ENCODE measurements at regions of chr7 and their contacts with region 1.

Region 1: GRCh38 chr7:151226875-151227782 is at the start of gene ABCF2:
- DNase-seq: peak; percentile 93 to 99 (median 97)
- ATAC-seq: peak; percentile 99
- H3K4me3 ChIP-seq: peak within 1 kb of the TSS; percentile 90
- H3K4me3 Mint-ChIP-seq: peak within 1 kb of the TSS; percentile 99
- H3K27ac ChIP-seq: peak within 1 kb of the TSS; percentile 63 to 71
- H3K27ac Mint-ChIP-seq: peak within 1 kb of the TSS; percentile 90
- H3K4me1 ChIP-seq: peaks cover 38% of the 10 kb centered on the region
- H3K4me1 Mint-ChIP-seq: peaks cover 41% of the 10 kb centered on the region
- H3K27me3 ChIP-seq: no peaks in the 10 kb centered on the region
- H3K27me3 Mint-ChIP-seq: no peaks in the 10 kb centered on the region
- CTCF ChIP-seq: no peak
- total RNA-seq, gene ABCF2: 12.3 to 13.2 TPM

Region 2: GRCh38 chr7:149771721-149772240 is 1455.3 kb before region 1 on chr7:
- CTCF ChIA-PET with region 1: no interaction called
- POLR2A ChIA-PET with region 1: no interaction called
- intact Hi-C with region 1: loop called in 1 of 2 experiments (anchors 2 kb)
- DNase-seq: peak; percentile 73 to 93 (median 86)
- ATAC-seq: peak; percentile 87
- H3K4me3 ChIP-seq: peak overlapping the region; percentile 67
- H3K4me3 Mint-ChIP-seq: peak overlapping the region; percentile 84
- H3K27ac ChIP-seq: no peak overlapping the region
- H3K27ac Mint-ChIP-seq: no peak overlapping the region
- H3K4me1 ChIP-seq: peaks cover 31% of the 10 kb centered on the region
- H3K4me1 Mint-ChIP-seq: peaks cover 20% of the 10 kb centered on the region
- H3K27me3 ChIP-seq: no peaks in the 10 kb centered on the region
- H3K27me3 Mint-ChIP-seq: no peaks in the 10 kb centered on the region
- CTCF ChIP-seq: no peak

Region 3: GRCh38 chr7:151181011-151181431 is 46.1 kb before region 1 on chr7:
- CTCF ChIA-PET with region 1: no interaction called
- POLR2A ChIA-PET with region 1: no interaction called
- intact Hi-C with region 1: no loop called
- DNase-seq: peak in 1 of 14 experiments; percentile 17
- ATAC-seq: no peak
- H3K4me3 ChIP-seq: no peak overlapping the region
- H3K4me3 Mint-ChIP-seq: no peak overlapping the region
- H3K27ac ChIP-seq: no peak overlapping the region
- H3K27ac Mint-ChIP-seq: no peak overlapping the region
- H3K4me1 ChIP-seq: no peaks in the 10 kb centered on the region
- H3K4me1 Mint-ChIP-seq: no peaks in the 10 kb centered on the region
- H3K27me3 ChIP-seq: no peaks in the 10 kb centered on the region
- H3K27me3 Mint-ChIP-seq: peaks cover 12% of the 10 kb centered on the region
- CTCF ChIP-seq: no peak

Region 4: GRCh38 chr7:151206914-151207313 is 20.2 kb before region 1 on chr7:
- CTCF ChIA-PET with region 1: interaction called, 5 read pairs
- POLR2A ChIA-PET with region 1: interaction called, 14 read pairs
- intact Hi-C with region 1: loop called in 1 of 2 experiments (anchors 2 kb)
- DNase-seq: peak in 5 of 14 experiments; percentile 19 to 84 (median 71)
- ATAC-seq: peak; percentile 83
- H3K4me3 ChIP-seq: no peak overlapping the region
- H3K4me3 Mint-ChIP-seq: peak overlapping the region; percentile 45
- H3K27ac ChIP-seq: peak overlapping the region in 1 of 2 donors; percentile 70
- H3K27ac Mint-ChIP-seq: peak overlapping the region; percentile 71
- H3K4me1 ChIP-seq: peaks cover 58% of the 10 kb centered on the region
- H3K4me1 Mint-ChIP-seq: peaks cover 28% of the 10 kb centered on the region
- H3K27me3 ChIP-seq: no peaks in the 10 kb centered on the region
- H3K27me3 Mint-ChIP-seq: no peaks in the 10 kb centered on the region
- CTCF ChIP-seq: no peak

Region 5: GRCh38 chr7:151351027-151351426 is 123.9 kb after region 1 on chr7:
- CTCF ChIA-PET with region 1: no interaction called
- POLR2A ChIA-PET with region 1: interaction called, 5 read pairs
- intact Hi-C with region 1: loop called (anchors 5 kb)
- DNase-seq: peak in 7 of 14 experiments; percentile 12 to 62 (median 37)
- ATAC-seq: no peak
- H3K4me3 ChIP-seq: no peak overlapping the region
- H3K4me3 Mint-ChIP-seq: peak overlapping the region; percentile 70
- H3K27ac ChIP-seq: peak overlapping the region; percentile 60 to 93
- H3K27ac Mint-ChIP-seq: peak overlapping the region; percentile 94
- H3K4me1 ChIP-seq: peaks cover 51% of the 10 kb centered on the region
- H3K4me1 Mint-ChIP-seq: peaks cover 59% of the 10 kb centered on the region
- H3K27me3 ChIP-seq: no peaks in the 10 kb centered on the region
- H3K27me3 Mint-ChIP-seq: no peaks in the 10 kb centered on the region
- CTCF ChIP-seq: no peak

Measured in CD4-positive, alpha-beta T cell (primary cell).